Esophagus squamous epithelium (tissue), 5 donors: ENCODE measurements at regions of chr16 and their contacts with region 1.

Region 1: DNA sequence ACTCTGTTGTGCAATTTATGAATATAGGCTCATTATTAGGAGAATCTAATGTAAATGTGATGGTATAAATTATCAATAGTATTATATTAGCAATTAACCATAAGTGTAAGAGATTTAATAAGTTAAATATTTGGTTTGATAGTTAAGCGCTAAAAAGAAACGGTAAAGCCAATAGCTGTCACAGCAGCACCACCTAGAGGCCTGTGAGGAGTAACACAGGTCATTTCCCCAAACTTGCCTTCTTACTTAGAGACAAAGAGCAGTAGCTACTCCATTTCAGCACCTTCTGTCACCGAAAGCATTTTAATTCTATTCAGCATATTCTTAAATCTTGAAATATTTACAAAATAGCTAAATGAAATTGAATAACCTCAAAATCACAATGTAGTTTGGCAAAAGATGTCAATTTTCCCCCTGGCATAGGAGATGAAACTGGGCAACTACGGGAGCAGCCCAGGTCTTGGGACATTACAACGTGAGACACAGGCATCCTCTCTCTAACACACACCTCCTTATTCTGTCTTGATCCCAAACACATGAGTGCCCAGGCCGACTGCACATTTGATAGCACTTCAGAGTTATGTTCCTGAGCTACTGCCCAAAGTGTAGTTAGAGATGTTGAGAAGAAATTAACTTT is 14.2 kb upstream of the DYNLRB2 start:
- DNase-seq: no peak
- H3K4me3 ChIP-seq: no peak overlapping the region
- H3K27ac ChIP-seq: no peak overlapping the region
- H3K4me1 ChIP-seq: peaks cover 0 to 9% (median 0%) of the 10 kb centered on the region in 3 donors
- H3K27me3 ChIP-seq: no peaks in the 10 kb centered on the region
- CTCF ChIP-seq: peak; percentile 61 to 85 (median 76)
- POLR2A ChIP-seq: no peak

Region 2: DNA sequence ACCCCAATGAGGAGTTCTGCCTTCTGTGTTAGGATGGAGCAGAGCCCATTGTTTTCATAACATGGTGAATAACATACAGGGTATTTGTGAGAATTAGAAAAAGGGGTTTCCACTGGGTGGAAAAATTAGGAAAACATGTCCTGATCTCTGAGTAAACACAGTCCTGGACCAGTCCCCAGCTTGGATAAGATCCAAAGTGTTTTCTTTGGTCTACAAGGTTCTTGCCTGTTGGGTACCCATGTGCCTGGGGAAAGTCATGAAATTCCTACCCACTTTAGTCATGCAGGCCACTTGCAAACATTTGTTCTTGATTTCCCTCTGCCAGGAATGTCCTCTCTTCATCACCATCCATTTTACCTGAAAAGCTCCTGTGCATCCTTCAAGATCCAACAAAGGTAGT is 150.6 kb before region 1 on chr16:
- intact Hi-C with region 1: no loop called
- DNase-seq: no peak
- H3K4me3 ChIP-seq: no peak overlapping the region
- H3K27ac ChIP-seq: no peak overlapping the region
- H3K4me1 ChIP-seq: no peaks in the 10 kb centered on the region
- H3K27me3 ChIP-seq: no peaks in the 10 kb centered on the region
- CTCF ChIP-seq: no peak
- POLR2A ChIP-seq: no peak

Region 3: GRCh38 chr16:80816365-80816764 is 289.8 kb after region 1 on chr16:
- intact Hi-C with region 1: loop called (anchors 10 kb)
- DNase-seq: no peak
- H3K4me3 ChIP-seq: no peak overlapping the region
- H3K27ac ChIP-seq: no peak overlapping the region
- H3K4me1 ChIP-seq: no peaks in the 10 kb centered on the region
- H3K27me3 ChIP-seq: peaks cover 0 to 31% (median 0%) of the 10 kb centered on the region in 4 donors
- CTCF ChIP-seq: no peak
- POLR2A ChIP-seq: no peak